OCI-LY7 (cell line): ENCODE measurements at regions of chr6 and their contacts with region 1.

Region 1: DNA sequence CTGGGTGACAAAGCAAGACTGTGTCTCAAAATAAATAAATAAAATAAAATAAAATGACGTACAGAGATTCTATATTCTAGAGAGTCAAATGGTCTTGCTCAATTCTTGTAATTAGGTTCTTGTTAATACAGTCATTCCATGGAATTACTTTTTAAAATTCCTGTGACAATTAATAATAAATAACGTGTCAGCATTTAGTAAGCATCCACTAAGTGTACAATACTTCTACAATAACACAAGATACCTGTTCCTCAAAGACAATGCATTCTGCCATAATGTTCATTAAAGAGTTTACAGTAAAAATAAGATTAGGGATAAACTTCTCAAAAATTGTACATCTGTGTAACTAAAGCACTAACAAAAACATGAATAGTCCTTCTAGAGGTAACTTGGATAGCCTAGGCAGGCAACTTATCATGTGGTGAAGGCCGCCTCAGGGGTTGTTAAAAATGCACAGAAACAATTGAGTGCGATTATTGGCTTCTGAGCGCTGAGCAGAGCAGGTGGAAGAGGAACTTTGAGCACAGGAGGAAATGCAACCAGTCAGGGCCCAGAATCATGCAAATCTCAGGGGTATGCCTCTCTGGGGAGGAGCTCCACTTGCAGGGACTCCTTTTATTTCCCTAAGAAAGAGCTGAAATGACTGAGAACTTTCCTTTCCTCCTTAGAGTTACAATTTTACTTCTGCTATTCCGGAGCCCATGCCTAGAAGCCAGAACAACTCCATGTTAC is 37.1 kb downstream of the QRSL1 start:
- DNase-seq: peak; percentile 93
- H3K4me3 ChIP-seq: peak overlapping the region; percentile 29
- H3K27ac ChIP-seq: peak overlapping the region; percentile 92
- H3K4me1 ChIP-seq: peaks cover 61% of the 10 kb centered on the region
- CTCF ChIP-seq: no peak

Region 2: GRCh38 chr6:106591111-106591825 is 75.2 kb before region 1 on chr6:
- CTCF ChIA-PET with region 1: no interaction called
- POLR2A ChIA-PET with region 1: no interaction called
- intact Hi-C with region 1: no loop called
- DNase-seq: no peak
- H3K4me3 ChIP-seq: no peak overlapping the region
- H3K27ac ChIP-seq: no peak overlapping the region
- H3K4me1 ChIP-seq: no peaks in the 10 kb centered on the region
- CTCF ChIP-seq: no peak

Region 3: GRCh38 chr6:106608062-106608668 is 58.3 kb before region 1 on chr6:
- CTCF ChIA-PET with region 1: no interaction called
- POLR2A ChIA-PET with region 1: interaction called, 8 read pairs
- intact Hi-C with region 1: loop called (anchors 5 kb)
- DNase-seq: peak; percentile 82
- H3K4me3 ChIP-seq: no peak overlapping the region
- H3K27ac ChIP-seq: no peak overlapping the region
- H3K4me1 ChIP-seq: peaks cover 51% of the 10 kb centered on the region
- CTCF ChIP-seq: peak; percentile 87

Region 4: DNA sequence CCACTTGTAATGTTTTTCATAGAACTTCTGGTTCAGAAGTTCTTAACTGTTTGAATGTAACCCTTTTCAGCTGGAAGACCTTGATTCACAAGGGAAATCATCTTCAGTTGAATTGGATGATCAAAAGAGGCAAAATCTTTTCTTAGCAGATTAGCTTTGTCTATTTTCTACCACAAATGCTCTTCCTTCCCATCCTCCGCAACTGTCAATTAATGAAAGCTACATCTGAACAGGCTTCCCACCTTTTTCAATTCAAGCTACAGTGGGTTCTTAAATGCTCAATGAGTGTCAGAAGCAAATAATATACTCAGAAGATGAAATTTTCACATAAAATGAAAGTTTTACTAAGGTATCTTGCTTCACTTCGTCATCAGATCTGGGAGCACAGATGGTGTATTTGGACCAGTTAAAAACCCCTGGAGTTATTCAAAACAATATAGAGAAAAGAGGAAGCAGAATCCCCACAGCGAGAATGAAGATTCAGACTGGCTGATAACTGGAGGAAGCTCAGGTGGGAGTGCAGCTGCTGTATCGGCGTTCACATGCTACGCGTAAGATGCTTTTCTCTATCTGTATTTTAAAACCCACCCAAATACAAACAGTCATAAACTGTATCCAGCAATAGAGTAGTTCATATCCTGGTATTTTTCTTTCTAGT is 17.7 kb before region 1 on chr6:
- CTCF ChIA-PET with region 1: no interaction called
- POLR2A ChIA-PET with region 1: interaction called, 15 read pairs
- intact Hi-C with region 1: no loop called
- DNase-seq: peak; percentile 91
- H3K4me3 ChIP-seq: peak overlapping the region; percentile 73
- H3K27ac ChIP-seq: peak overlapping the region; percentile 96
- H3K4me1 ChIP-seq: peaks cover 49% of the 10 kb centered on the region
- CTCF ChIP-seq: no peak